Activated CD4-positive, alpha-beta T cell treated with anti-CD3 and anti-CD28 coated beads, Interleukin-2, amount 10 ng/mL, durations not matched to agents 7 days and 5 days (primary cell): ENCODE measurements at regions of chr15 and their contacts with region 1.

Region 1: GRCh38 chr15:85402195-85402881 is 21.9 kb downstream of the AKAP13 start:
- DNase-seq: no peak
- H3K4me3 Mint-ChIP-seq: no peak overlapping the region
- H3K27ac Mint-ChIP-seq: no peak overlapping the region
- H3K4me1 Mint-ChIP-seq: peaks cover 61% of the 10 kb centered on the region
- H3K27me3 Mint-ChIP-seq: no peaks in the 10 kb centered on the region

Region 2: GRCh38 chr15:85412956-85413854 is 10.9 kb after region 1 on chr15:
- CTCF ChIA-PET with region 1: interaction called, 10 read pairs
- POLR2A ChIA-PET with region 1: interaction called, 4 read pairs
- DNase-seq: peak; percentile 80
- H3K4me3 Mint-ChIP-seq: peak overlapping the region; percentile 2
- H3K27ac Mint-ChIP-seq: peak overlapping the region; percentile 66
- H3K4me1 Mint-ChIP-seq: peaks cover 58% of the 10 kb centered on the region
- H3K27me3 Mint-ChIP-seq: no peaks in the 10 kb centered on the region

Region 3: DNA sequence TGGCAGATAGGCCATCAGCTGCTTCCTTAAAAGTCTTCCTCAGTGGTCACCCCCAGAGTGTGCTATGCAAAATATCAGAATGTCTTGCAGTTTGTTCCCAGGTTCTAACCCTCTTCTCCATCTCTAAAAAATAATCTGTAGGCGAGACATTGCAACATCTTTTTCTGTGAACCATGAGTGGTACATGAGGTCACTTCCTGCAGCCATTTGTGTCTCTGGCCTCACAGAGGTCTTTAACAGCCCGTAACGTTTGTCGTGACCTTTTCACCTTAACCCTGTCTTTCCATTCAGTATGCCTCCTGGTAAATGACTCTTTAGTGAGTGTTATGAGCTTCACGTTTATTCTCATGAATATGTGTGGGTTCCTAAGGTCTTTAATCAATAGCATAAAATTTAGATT is 247.0 kb after region 1 on chr15:
- CTCF ChIA-PET with region 1: no interaction called
- POLR2A ChIA-PET with region 1: no interaction called
- DNase-seq: no peak
- H3K4me3 Mint-ChIP-seq: no peak overlapping the region
- H3K27ac Mint-ChIP-seq: peak overlapping the region; percentile 75
- H3K4me1 Mint-ChIP-seq: peaks cover 39% of the 10 kb centered on the region
- H3K27me3 Mint-ChIP-seq: no peaks in the 10 kb centered on the region